PC-9 (cell line): ENCODE measurements at regions of chr18 and their contacts with region 1.

Region 1: DNA sequence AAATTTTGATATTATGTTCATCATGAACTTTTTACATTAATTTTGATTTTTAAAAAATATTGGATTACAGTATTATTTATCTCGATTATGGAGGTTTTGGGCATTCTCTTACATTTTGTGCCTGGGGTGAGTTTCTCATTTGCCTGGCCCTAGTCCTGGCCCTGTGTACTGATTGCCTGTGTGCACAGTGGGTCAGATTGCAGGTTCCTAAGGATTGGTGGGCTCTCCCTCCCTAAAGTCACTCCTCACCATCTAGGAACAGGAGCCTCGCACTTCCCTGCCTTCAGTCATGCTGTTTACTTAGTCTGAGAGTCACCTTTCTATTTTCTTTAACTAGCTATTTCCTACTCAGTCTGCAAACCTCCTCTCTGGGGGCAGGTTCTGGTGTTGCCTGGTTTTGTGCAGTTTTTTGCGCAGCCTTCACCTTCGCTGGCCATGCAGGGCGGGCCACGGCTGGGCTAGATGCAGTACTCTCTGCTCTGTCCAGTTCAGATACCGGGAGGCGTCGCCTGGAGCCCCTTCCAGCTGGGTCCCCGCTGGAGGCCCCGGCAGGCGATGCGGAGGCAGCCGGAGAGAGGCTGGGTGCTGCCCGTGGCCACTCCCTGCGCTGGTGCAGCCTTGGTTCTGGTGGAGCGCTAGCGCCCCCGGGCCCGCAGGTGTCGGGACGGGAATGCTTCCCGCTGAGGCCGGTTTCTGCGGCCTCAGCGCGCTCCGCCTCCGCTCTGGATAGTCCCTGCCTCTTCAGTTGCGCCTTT is 23.3 kb upstream of the MC5R start:
- DNase-seq: peak in 1 of 2 experiments; percentile 89
- H3K4me3 ChIP-seq: no peak overlapping the region
- H3K27ac ChIP-seq: no peak overlapping the region
- H3K4me1 ChIP-seq: peaks cover 13% of the 10 kb centered on the region
- H3K27me3 ChIP-seq: no peaks in the 10 kb centered on the region
- CTCF ChIP-seq: no peak; the same call in 1 of the 2 replicates

Region 2: GRCh38 chr18:13216092-13216582 is 584.5 kb before region 1 on chr18:
- CTCF ChIA-PET with region 1: no interaction called
- POLR2A ChIA-PET with region 1: no interaction called
- intact Hi-C with region 1: loop called (anchors 1 kb)
- DNase-seq: peak in 1 of 2 experiments; percentile 51
- H3K4me3 ChIP-seq: no peak overlapping the region
- H3K27ac ChIP-seq: no peak overlapping the region
- H3K4me1 ChIP-seq: no peaks in the 10 kb centered on the region
- H3K27me3 ChIP-seq: peaks cover 66% of the 10 kb centered on the region
- CTCF ChIP-seq: no peak; the same call in 1 of the 2 replicates

Region 3: DNA sequence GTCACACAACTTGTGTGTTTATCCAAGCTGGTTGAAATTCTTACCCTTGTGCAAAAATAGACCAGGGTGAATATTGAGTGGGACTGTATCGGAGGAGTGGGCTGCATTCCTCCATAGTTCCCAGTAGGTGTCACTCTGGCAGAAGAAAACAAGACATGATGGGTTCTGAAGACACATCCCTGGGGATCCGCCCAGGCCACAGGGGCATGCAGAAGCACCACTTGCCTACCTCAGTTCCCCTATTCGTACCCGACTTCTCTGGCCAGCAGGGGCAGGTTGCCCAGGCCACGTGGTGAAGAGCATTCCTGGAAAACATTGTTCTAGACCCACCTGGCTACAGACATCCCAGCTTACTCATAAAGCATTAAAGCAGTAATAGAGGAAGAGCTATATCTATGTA is 242.6 kb before region 1 on chr18:
- CTCF ChIA-PET with region 1: no interaction called
- POLR2A ChIA-PET with region 1: no interaction called
- intact Hi-C with region 1: loop called (anchors 10 kb)
- DNase-seq: peak in 1 of 2 experiments; percentile 11
- H3K4me3 ChIP-seq: no peak overlapping the region
- H3K27ac ChIP-seq: no peak overlapping the region
- H3K4me1 ChIP-seq: no peaks in the 10 kb centered on the region
- H3K27me3 ChIP-seq: peaks cover 73% of the 10 kb centered on the region
- CTCF ChIP-seq: peak; percentile 61

Region 4: GRCh38 chr18:13619505-13620202 is 181.0 kb before region 1 on chr18:
- CTCF ChIA-PET with region 1: no interaction called
- POLR2A ChIA-PET with region 1: no interaction called
- intact Hi-C with region 1: no loop called
- DNase-seq: no peak
- H3K4me3 ChIP-seq: no peak overlapping the region
- H3K27ac ChIP-seq: no peak overlapping the region
- H3K4me1 ChIP-seq: no peaks in the 10 kb centered on the region
- H3K27me3 ChIP-seq: peaks cover 93% of the 10 kb centered on the region
- CTCF ChIP-seq: no peak

Region 5: DNA sequence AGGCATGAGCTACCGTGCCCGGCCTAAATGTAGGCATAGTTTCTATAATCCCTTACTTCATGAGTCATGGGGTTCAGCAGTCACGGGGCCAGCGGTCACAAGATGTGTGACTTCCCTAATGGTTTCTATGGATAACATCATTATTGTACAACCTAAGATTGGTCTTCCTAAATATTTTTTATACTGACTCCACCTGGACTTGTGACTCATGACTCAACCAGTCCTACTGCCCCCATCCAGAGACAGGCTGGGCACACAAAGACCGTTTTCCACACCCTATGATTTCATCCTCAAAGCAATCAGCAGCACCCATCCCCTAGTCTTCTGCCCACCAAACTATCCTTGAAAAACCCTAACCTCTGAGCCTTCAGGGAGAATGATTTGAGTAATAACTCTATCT is 90.2 kb before region 1 on chr18:
- CTCF ChIA-PET with region 1: no interaction called
- POLR2A ChIA-PET with region 1: interaction called, 6 read pairs
- intact Hi-C with region 1: loop called (anchors 1 kb)
- DNase-seq: peak; percentile 81 to 96
- H3K4me3 ChIP-seq: no peak overlapping the region
- H3K27ac ChIP-seq: peak overlapping the region; percentile 96
- H3K4me1 ChIP-seq: peaks cover 19% of the 10 kb centered on the region
- H3K27me3 ChIP-seq: no peaks in the 10 kb centered on the region
- CTCF ChIP-seq: no peak

Region 6: GRCh38 chr18:13813271-13813849 is 12.7 kb after region 1 on chr18:
- CTCF ChIA-PET with region 1: interaction called, 10 read pairs
- POLR2A ChIA-PET with region 1: interaction called, 4 read pairs
- intact Hi-C with region 1: no loop called
- DNase-seq: peak; percentile 47 to 67
- H3K4me3 ChIP-seq: no peak overlapping the region
- H3K27ac ChIP-seq: no peak overlapping the region
- H3K4me1 ChIP-seq: peaks cover 19% of the 10 kb centered on the region
- H3K27me3 ChIP-seq: peaks cover 8% of the 10 kb centered on the region; the same call in 1 of the 2 replicates
- CTCF ChIP-seq: peak; percentile 88

Region 7: GRCh38 chr18:13849526-13850170 is 49.0 kb after region 1 on chr18:
- CTCF ChIA-PET with region 1: no interaction called
- POLR2A ChIA-PET with region 1: no interaction called
- intact Hi-C with region 1: no loop called
- DNase-seq: peak; percentile 19 to 39
- H3K4me3 ChIP-seq: peak overlapping the region; percentile 28; the same call in 1 of the 2 replicates
- H3K27ac ChIP-seq: no peak overlapping the region
- H3K4me1 ChIP-seq: 0 out of 2 replicates have a peak, but pooled peaks cover 9% of the 10 kb centered on the region
- H3K27me3 ChIP-seq: no peaks in the 10 kb centered on the region; the same call in 1 of the 2 replicates
- CTCF ChIP-seq: no peak

Region 8: DNA sequence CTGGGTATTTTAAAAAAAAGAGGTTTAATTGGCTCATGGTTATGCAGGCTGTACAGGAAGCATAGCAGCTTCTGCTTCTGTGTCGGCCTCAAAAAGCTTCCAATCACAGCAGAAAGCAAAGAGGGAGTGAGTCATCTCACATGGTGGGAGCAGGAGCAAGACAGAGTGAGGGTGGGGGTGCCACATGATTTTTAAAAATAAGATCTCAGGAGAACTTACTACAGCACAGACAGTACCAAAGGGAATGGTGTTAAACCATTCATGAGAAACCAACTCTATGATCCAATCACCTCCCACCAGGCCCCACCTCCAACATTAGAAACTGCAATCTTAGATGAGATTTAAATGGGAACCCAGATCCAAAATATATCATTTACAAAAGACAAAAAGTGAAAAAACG is 316.9 kb after region 1 on chr18:
- CTCF ChIA-PET with region 1: no interaction called
- POLR2A ChIA-PET with region 1: no interaction called
- intact Hi-C with region 1: no loop called
- DNase-seq: no peak
- H3K4me3 ChIP-seq: no peak overlapping the region
- H3K27ac ChIP-seq: no peak overlapping the region
- H3K4me1 ChIP-seq: no peaks in the 10 kb centered on the region
- H3K27me3 ChIP-seq: no peaks in the 10 kb centered on the region
- CTCF ChIP-seq: no peak